Caco-2 (cell line): ENCODE measurements at regions of chrX and their contacts with region 1.

Region 1: DNA sequence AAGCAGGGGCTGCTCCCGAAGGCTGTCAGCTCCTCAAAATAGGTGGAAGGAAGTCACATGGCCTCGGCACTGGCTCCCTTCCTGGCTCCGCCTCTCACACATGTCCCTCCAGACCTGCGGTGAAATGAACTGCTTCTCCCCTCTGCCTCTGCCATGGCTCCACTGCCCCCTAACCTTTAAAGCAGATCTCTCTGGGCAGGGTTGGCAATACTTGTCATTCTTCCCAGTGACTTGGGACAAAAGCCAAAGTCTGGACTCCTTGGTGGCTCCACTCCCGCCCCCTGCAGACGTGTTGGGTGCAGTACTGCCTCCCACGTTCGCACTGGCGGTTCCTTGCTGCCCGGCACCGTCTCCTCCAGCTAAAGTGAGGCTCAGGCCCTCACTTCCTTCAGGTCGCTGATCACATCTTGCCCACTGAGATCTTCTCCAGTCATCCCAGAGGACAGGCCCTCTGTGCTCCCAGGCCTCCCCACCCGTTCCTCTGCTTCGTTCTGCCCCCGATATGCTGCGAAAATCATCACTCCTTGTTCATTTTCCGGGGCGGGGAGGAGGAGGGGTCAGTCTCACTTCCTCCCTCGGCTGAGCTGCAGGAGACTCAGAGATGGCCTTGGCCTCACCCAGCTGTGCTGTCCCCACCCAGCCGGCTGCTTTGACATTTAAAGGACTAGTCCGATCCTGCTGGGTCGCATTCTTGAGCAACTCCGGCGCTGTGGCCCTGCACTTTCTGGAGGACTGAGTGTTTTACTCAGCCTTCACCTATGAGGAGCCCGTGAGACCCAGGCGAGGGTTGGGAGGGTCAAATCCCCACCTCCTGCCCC is 97.4 kb downstream of the PHKA2 start:
- DNase-seq: peak; percentile 86 to 90
- H3K4me3 ChIP-seq: peak overlapping the region; percentile 34
- H3K4me3 Mint-ChIP-seq: peak overlapping the region; percentile 79
- H3K27ac Mint-ChIP-seq: peak overlapping the region; percentile 92
- H3K4me1 ChIP-seq: peaks cover 47% of the 10 kb centered on the region
- H3K4me1 Mint-ChIP-seq: peaks cover 20% of the 10 kb centered on the region
- H3K27me3 ChIP-seq: no peaks in the 10 kb centered on the region
- H3K27me3 Mint-ChIP-seq: no peaks in the 10 kb centered on the region
- CTCF ChIP-seq: peak; percentile 39 to 68

Region 2: DNA sequence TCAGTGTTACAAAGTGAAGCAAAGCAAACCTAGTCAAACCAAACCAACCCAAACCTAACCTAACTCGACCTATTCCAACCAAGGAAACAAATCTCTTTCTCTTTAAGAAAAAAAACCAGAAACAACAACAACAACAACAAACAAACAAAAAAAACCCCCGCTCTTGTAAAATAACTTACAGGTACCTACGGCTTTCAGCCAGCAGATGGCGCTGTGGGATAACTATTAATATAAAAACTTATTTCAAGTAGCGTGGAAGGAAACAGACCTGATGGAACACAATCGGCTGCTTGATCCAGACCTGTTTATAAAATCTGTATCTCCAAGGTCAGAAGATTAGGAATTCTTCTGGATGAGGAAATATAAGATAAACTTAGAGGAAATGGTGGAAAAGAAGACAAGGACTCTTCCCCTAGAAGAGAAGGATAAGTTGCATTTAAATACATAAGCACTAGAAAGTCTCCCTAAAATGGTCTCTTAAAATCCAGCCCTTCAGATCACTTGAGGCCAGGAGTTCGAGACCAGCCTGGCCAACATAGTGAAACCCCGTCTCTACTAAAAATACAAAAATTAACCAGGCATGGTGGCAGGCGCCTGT is 495.5 kb before region 1 on chrX:
- CTCF ChIA-PET with region 1: no interaction called
- POLR2A ChIA-PET with region 1: no interaction called
- intact Hi-C with region 1: loop called (anchors 1 kb)
- DNase-seq: peak; percentile 38 to 56
- H3K4me3 ChIP-seq: no peak overlapping the region
- H3K4me3 Mint-ChIP-seq: no peak overlapping the region
- H3K27ac Mint-ChIP-seq: no peak overlapping the region
- H3K4me1 ChIP-seq: no peaks in the 10 kb centered on the region
- H3K4me1 Mint-ChIP-seq: no peaks in the 10 kb centered on the region
- H3K27me3 ChIP-seq: no peaks in the 10 kb centered on the region
- H3K27me3 Mint-ChIP-seq: no peaks in the 10 kb centered on the region
- CTCF ChIP-seq: peak; percentile 53 to 60

Region 3: DNA sequence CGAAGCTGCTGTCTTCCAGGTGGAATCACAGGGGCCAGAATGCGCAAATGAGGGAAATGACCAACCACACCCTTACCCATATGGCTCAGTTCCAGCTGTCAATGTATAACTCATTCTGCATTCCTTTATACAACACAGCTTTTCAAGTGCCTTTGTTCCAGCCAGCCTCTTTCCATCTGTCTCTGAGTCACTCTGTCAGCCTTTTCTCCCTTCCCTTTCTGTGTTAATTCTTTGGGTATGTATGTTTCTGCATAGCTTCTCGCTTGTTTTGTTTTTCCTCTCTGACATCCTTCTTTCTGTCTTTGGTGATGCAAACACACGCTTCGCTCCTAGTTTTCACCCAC is 269.2 kb before region 1 on chrX:
- CTCF ChIA-PET with region 1: interaction called, 3 read pairs
- POLR2A ChIA-PET with region 1: interaction called, 14 read pairs
- intact Hi-C with region 1: loop called (anchors 2 kb)
- DNase-seq: peak; percentile 66 to 70
- H3K4me3 ChIP-seq: no peak overlapping the region; the same call in 1 of the 2 replicates
- H3K4me3 Mint-ChIP-seq: peak overlapping the region; percentile 77
- H3K27ac Mint-ChIP-seq: peak overlapping the region; percentile 98
- H3K4me1 ChIP-seq: peaks cover 46% of the 10 kb centered on the region
- H3K4me1 Mint-ChIP-seq: peaks cover 23% of the 10 kb centered on the region
- H3K27me3 ChIP-seq: no peaks in the 10 kb centered on the region
- H3K27me3 Mint-ChIP-seq: no peaks in the 10 kb centered on the region
- CTCF ChIP-seq: no peak

Region 4: GRCh38 chrX:18721683-18722499 is 164.7 kb before region 1 on chrX:
- CTCF ChIA-PET with region 1: no interaction called
- POLR2A ChIA-PET with region 1: no interaction called
- intact Hi-C with region 1: loop called (anchors 1 kb)
- DNase-seq: peak; percentile 29 to 33
- H3K4me3 ChIP-seq: no peak overlapping the region
- H3K4me3 Mint-ChIP-seq: peak overlapping the region; percentile 33
- H3K27ac Mint-ChIP-seq: peak overlapping the region; percentile 49
- H3K4me1 ChIP-seq: peaks cover 12% of the 10 kb centered on the region; the same call in 1 of the 2 replicates
- H3K4me1 Mint-ChIP-seq: peaks cover 8% of the 10 kb centered on the region
- H3K27me3 ChIP-seq: no peaks in the 10 kb centered on the region
- H3K27me3 Mint-ChIP-seq: no peaks in the 10 kb centered on the region
- CTCF ChIP-seq: no peak

Region 5: DNA sequence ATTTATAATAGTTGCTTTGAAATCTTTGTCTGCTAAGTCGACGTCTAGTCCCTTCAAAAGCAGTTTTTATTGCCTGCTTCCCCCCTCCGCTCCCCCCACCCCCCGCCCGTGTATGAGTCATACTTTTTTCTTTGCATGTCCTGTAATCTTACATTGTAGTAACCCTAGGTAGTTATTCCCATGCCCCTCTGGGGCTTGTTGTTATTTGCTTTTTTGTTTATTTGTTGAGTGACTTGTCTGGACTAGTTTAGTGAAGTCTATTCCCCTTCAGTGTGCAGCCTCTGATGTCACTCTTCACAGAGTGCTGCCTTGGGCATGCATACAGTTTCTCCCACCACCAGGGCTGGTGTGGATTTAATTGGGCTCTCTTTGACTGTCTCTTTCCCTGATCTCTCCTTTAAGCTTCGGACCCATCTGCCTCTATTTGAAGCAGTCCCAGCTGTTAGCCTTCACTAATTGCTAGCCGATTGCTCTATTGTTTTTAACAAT is 92.9 kb before region 1 on chrX:
- CTCF ChIA-PET with region 1: no interaction called
- POLR2A ChIA-PET with region 1: no interaction called
- intact Hi-C with region 1: loop called (anchors 2 kb)
- DNase-seq: peak; percentile 41 to 50
- H3K4me3 ChIP-seq: no peak overlapping the region
- H3K4me3 Mint-ChIP-seq: no peak overlapping the region
- H3K27ac Mint-ChIP-seq: peak overlapping the region; percentile 81
- H3K4me1 ChIP-seq: peaks cover 6% of the 10 kb centered on the region; the same call in 1 of the 2 replicates
- H3K4me1 Mint-ChIP-seq: peaks cover 9% of the 10 kb centered on the region
- H3K27me3 ChIP-seq: no peaks in the 10 kb centered on the region
- H3K27me3 Mint-ChIP-seq: no peaks in the 10 kb centered on the region
- CTCF ChIP-seq: no peak

Region 6: GRCh38 chrX:18906286-18906685 is 19.7 kb after region 1 on chrX:
- CTCF ChIA-PET with region 1: no interaction called
- POLR2A ChIA-PET with region 1: no interaction called
- intact Hi-C with region 1: no loop called
- DNase-seq: no peak
- H3K4me3 ChIP-seq: no peak overlapping the region
- H3K4me3 Mint-ChIP-seq: no peak overlapping the region
- H3K27ac Mint-ChIP-seq: no peak overlapping the region
- H3K4me1 ChIP-seq: no peaks in the 10 kb centered on the region
- H3K4me1 Mint-ChIP-seq: no peaks in the 10 kb centered on the region
- H3K27me3 ChIP-seq: no peaks in the 10 kb centered on the region
- H3K27me3 Mint-ChIP-seq: no peaks in the 10 kb centered on the region
- CTCF ChIP-seq: no peak